Naive thymus-derived CD4-positive, alpha-beta T cell (primary cell): ENCODE measurements at regions of chr17 and their contacts with region 1.

Region 1: DNA sequence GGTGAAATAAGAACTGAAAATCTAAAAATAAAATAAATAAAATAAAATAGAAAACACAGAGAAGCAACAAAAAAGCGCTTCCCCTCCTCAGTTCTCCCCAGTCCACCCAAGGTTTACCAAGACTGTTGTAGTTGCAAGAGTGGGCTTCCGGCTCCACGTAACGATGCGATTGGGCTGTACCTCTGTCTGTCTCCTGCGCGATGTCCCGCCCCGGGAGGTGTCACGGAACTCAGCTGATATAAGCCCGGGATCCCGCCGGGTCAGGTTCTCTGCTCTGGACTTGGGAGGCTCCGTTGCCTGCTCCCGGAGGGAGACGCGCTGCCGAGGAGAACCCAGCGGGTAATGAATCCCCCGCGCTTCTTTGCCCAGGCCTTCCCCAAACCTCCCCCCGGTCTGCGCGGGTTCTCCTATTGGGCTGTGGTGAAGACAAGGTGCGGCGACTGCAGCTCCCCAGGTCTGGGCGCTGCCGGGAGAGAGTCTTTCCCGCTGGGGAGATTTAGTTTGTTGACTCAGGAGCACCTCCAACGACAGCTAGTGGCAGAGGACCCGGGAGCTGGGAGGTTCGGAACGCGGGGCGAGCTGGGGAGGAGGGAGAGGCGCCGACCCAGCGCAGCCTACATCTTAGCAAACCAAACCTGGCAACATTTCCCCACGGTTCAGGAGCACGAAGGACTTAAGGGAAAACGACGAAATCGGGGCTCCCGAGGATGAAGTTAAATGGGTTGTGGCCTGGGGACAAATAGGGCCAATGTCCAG is at the start of gene SLFN5:
- DNase-seq: peak; percentile 82 to 97 (median 94)
- ATAC-seq: peak; percentile 88
- H3K4me3 ChIP-seq: peak within 1 kb of the TSS; percentile 97
- H3K4me3 Mint-ChIP-seq: peak within 1 kb of the TSS; percentile 91 to 100 (median 100)
- H3K27ac ChIP-seq: peak within 1 kb of the TSS; percentile 85
- H3K27ac Mint-ChIP-seq: peak within 1 kb of the TSS; percentile 94 to 100 (median 99)
- H3K4me1 ChIP-seq: peaks cover 35 to 51% of the 10 kb centered on the region in 2 donors
- H3K4me1 Mint-ChIP-seq: peaks cover 32 to 62% (median 41%) of the 10 kb centered on the region in 7 donors
- H3K27me3 ChIP-seq: no peaks in the 10 kb centered on the region
- H3K27me3 Mint-ChIP-seq: no peaks in the 10 kb centered on the region
- total RNA-seq, gene SLFN5: 80.0 to 199 (median 133) TPM

Region 2: DNA sequence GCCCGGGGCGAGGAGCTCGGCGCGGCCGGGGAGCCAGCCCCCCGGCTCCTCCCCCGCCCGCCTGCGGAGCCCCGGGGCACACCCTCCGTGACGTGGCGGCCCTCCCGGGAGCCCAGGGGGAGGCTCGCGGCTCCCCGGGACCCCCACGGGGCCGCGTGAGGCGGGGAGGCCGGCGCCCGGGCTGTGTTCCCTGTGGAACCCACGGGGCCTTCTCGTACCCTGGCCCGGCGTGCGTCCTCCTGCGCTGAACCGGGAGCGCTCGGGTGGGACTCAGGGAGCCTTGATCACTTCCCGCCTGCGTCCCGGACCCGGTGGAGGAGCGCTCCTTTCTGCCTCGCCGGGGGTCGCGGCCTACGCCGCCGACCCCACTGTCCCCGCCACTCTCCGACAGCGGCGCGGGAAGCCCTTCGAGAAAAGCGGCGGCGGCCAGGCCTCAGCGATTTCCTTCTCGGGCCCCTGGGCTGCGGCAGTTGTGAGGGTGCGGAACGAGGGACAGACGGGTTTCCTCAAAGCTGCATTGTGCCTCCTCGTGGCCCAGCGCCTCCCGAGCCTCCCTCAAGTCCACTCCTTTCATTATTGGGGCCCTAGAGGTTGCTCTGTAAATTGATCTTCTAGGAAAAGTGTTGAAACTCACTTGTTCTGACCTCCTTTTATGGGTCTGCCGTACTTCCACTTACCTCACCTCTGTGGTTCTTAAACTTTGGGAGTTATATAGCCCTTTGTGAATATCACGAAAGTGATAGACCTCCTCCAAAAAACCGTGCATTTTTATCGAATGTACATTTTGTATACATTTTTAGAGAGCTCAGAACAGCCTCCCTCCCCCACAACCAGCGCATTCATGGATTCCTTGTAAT is 262.1 kb before region 1 on chr17:
- CTCF ChIA-PET with region 1: no interaction called
- POLR2A ChIA-PET with region 1: no interaction called
- intact Hi-C with region 1: loop called in 1 of 2 experiments (anchors 5 kb)
- DNase-seq: peak in 7 of 9 donors; percentile 65 to 87 (median 74)
- ATAC-seq: peak; percentile 91
- H3K4me3 ChIP-seq: peak overlapping the region; percentile 68
- H3K4me3 Mint-ChIP-seq: peak overlapping the region; percentile 87 to 97 (median 94)
- H3K27ac ChIP-seq: peak overlapping the region; percentile 99
- H3K27ac Mint-ChIP-seq: peak overlapping the region; percentile 91 to 98 (median 97)
- H3K4me1 ChIP-seq: peaks cover 17 to 26% of the 10 kb centered on the region in 2 donors
- H3K4me1 Mint-ChIP-seq: peaks cover 36 to 57% (median 53%) of the 10 kb centered on the region in 7 donors
- H3K27me3 ChIP-seq: no peaks in the 10 kb centered on the region
- H3K27me3 Mint-ChIP-seq: no peaks in the 10 kb centered on the region

Region 3: GRCh38 chr17:35161281-35161761 is 81.7 kb before region 1 on chr17:
- CTCF ChIA-PET with region 1: interaction called, 3 read pairs
- POLR2A ChIA-PET with region 1: interaction called, 50 read pairs
- intact Hi-C with region 1: loop called in 1 of 2 experiments (anchors 1 kb)
- DNase-seq: peak in 7 of 9 donors; percentile 31 to 68 (median 55)
- ATAC-seq: peak; percentile 77
- H3K4me3 ChIP-seq: peak overlapping the region; percentile 30
- H3K4me3 Mint-ChIP-seq: peak overlapping the region; percentile 41 to 83 (median 72)
- H3K27ac ChIP-seq: peak overlapping the region; percentile 75
- H3K27ac Mint-ChIP-seq: peak overlapping the region; percentile 65 to 96 (median 90)
- H3K4me1 ChIP-seq: peaks cover 40 to 52% of the 10 kb centered on the region in 2 donors
- H3K4me1 Mint-ChIP-seq: peaks cover 34 to 76% (median 70%) of the 10 kb centered on the region in 7 donors
- H3K27me3 ChIP-seq: no peaks in the 10 kb centered on the region
- H3K27me3 Mint-ChIP-seq: peaks cover 0 to 11% (median 0%) of the 10 kb centered on the region in 5 donors

Region 4: DNA sequence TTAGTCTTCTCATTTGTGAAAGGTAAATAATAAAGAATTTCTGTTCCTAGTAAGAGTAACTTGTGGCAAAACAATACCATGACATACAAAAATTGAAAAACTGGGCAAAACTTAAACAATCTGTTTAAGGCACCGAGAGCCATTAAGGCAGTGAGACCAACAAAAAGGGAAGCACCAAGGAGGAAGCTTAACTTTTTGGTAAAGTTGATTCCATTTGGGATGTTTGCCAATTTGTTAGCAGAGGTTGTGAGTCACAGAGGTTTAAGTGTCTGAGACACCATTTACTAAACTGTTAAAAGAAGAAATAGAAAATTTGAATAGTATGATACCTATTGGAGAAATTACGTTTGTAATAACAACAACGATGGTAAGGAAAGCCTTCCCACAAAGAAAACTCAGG is 53.7 kb before region 1 on chr17:
- CTCF ChIA-PET with region 1: interaction called, 3 read pairs
- POLR2A ChIA-PET with region 1: interaction called, 57 read pairs
- intact Hi-C with region 1: no loop called
- DNase-seq: no peak
- ATAC-seq: no peak
- H3K4me3 ChIP-seq: no peak overlapping the region
- H3K4me3 Mint-ChIP-seq: peak overlapping the region in 9 of 10 donors; percentile 45 to 84 (median 68)
- H3K27ac ChIP-seq: no peak overlapping the region
- H3K27ac Mint-ChIP-seq: peak overlapping the region in 7 of 9 donors; percentile 6 to 94 (median 89)
- H3K4me1 ChIP-seq: peaks cover 14 to 53% of the 10 kb centered on the region in 2 donors
- H3K4me1 Mint-ChIP-seq: peaks cover 44 to 91% (median 72%) of the 10 kb centered on the region in 7 donors
- H3K27me3 ChIP-seq: no peaks in the 10 kb centered on the region
- H3K27me3 Mint-ChIP-seq: peaks cover 0 to 4% (median 0%) of the 10 kb centered on the region in 5 donors

Region 5: DNA sequence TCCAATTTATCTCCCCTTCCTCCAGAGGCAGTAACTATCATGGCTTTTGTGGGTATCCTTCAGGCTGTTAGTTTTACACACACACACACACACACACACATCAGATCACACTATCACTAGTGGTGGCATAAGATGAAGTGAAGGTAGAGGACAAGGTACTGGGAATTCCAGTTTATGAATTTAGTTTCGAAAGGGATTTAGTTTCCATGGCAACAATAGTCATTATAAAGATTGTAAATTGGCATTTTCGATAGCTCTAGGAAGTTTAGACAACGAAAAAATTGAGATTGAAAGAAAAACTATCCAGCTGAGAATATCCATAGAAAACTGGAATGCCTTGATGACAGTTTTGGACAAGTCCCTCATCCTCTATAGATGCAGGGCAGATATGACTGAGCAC is 30.7 kb after region 1 on chr17:
- CTCF ChIA-PET with region 1: no interaction called
- POLR2A ChIA-PET with region 1: interaction called, 8 read pairs
- intact Hi-C with region 1: loop called in 1 of 2 experiments (anchors 2 kb)
- DNase-seq: no peak
- ATAC-seq: no peak
- H3K4me3 ChIP-seq: no peak overlapping the region
- H3K4me3 Mint-ChIP-seq: peak overlapping the region in 2 of 10 donors; percentile 22 to 60
- H3K27ac ChIP-seq: peak overlapping the region; percentile 3
- H3K27ac Mint-ChIP-seq: peak overlapping the region in 7 of 9 donors; percentile 10 to 91 (median 86)
- H3K4me1 ChIP-seq: peaks cover 0 to 15% of the 10 kb centered on the region in 2 donors
- H3K4me1 Mint-ChIP-seq: peaks cover 19 to 80% (median 66%) of the 10 kb centered on the region in 7 donors
- H3K27me3 ChIP-seq: no peaks in the 10 kb centered on the region
- H3K27me3 Mint-ChIP-seq: peaks cover 0 to 16% (median 0%) of the 10 kb centered on the region in 5 donors

Region 6: GRCh38 chr17:35432176-35433074 is 189.4 kb after region 1 on chr17 and contains the start of gene SLFN12:
- CTCF ChIA-PET with region 1: no interaction called
- POLR2A ChIA-PET with region 1: interaction called, 4 read pairs
- intact Hi-C with region 1: loop called in 1 of 2 experiments (anchors 1 kb)
- DNase-seq: peak in 8 of 9 donors; percentile 31 to 75 (median 70)
- ATAC-seq: peak; percentile 95
- H3K4me3 ChIP-seq: peak within 1 kb of the TSS; percentile 70
- H3K4me3 Mint-ChIP-seq: peak within 1 kb of the TSS; percentile 86 to 100 (median 96)
- H3K27ac ChIP-seq: peak within 1 kb of the TSS; percentile 63
- H3K27ac Mint-ChIP-seq: peak within 1 kb of the TSS; percentile 82 to 94 (median 91)
- H3K4me1 ChIP-seq: peaks cover 16 to 28% of the 10 kb centered on the region in 2 donors
- H3K4me1 Mint-ChIP-seq: peaks cover 36 to 65% (median 59%) of the 10 kb centered on the region in 7 donors
- H3K27me3 ChIP-seq: no peaks in the 10 kb centered on the region
- H3K27me3 Mint-ChIP-seq: no peaks in the 10 kb centered on the region
- total RNA-seq, gene SLFN12: 4.2 to 14.9 (median 6.5) TPM

Region 7: DNA sequence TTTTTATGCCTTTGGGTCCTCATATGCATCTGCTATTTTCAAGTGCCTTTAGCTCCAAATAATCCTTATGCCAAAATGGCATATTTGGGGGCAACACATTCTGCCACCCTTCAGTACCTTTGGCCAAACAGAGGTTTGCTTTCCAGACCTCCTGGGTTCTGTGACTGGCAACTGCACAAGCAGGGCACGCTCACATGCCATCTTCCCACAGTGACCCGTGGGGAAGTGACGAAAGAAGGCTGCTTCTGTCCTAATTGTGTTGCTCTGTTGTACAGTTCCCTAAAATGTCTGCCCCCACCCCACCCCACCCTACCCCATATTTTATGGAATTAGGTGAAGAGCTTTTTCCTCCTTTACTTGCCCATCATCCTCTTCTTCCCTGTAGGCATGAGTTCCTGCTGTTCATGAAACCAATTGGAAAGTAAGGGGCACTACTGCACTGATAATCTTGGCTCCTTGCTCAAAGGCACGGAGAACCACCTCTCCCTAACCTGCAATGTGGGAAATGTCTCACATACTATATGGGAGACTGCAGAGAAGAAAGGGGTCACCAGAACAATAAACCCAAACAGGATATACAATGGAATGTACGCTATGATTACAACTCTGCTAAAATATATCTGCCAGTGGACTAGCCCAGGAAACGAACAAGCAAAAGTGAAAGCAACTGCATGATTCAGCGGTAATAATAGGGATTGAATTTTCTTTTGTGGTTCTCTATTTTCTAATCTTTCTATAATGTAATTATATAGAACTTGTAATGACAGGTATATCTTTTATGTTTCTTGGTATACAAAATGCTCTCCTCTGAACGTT is 297.8 kb after region 1 on chr17:
- CTCF ChIA-PET with region 1: interaction called, 6 read pairs
- POLR2A ChIA-PET with region 1: interaction called, 253 read pairs
- intact Hi-C with region 1: loop called (anchors 1 kb)
- DNase-seq: peak; percentile 16 to 42 (median 36)
- ATAC-seq: peak; percentile 65
- H3K4me3 ChIP-seq: peak overlapping the region; percentile 64
- H3K4me3 Mint-ChIP-seq: peak overlapping the region; percentile 75 to 99 (median 87)
- H3K27ac ChIP-seq: peak overlapping the region; percentile 74
- H3K27ac Mint-ChIP-seq: peak overlapping the region; percentile 88 to 99 (median 95)
- H3K4me1 ChIP-seq: peaks cover 25 to 30% of the 10 kb centered on the region in 2 donors
- H3K4me1 Mint-ChIP-seq: peaks cover 32 to 64% (median 55%) of the 10 kb centered on the region in 7 donors
- H3K27me3 ChIP-seq: no peaks in the 10 kb centered on the region
- H3K27me3 Mint-ChIP-seq: no peaks in the 10 kb centered on the region